Activated B cell treated with CpG ODN at 0.5 μM for 24 hours (primary cell): ENCODE measurements at regions of chr20 and their contacts with region 1.

Region 1: DNA sequence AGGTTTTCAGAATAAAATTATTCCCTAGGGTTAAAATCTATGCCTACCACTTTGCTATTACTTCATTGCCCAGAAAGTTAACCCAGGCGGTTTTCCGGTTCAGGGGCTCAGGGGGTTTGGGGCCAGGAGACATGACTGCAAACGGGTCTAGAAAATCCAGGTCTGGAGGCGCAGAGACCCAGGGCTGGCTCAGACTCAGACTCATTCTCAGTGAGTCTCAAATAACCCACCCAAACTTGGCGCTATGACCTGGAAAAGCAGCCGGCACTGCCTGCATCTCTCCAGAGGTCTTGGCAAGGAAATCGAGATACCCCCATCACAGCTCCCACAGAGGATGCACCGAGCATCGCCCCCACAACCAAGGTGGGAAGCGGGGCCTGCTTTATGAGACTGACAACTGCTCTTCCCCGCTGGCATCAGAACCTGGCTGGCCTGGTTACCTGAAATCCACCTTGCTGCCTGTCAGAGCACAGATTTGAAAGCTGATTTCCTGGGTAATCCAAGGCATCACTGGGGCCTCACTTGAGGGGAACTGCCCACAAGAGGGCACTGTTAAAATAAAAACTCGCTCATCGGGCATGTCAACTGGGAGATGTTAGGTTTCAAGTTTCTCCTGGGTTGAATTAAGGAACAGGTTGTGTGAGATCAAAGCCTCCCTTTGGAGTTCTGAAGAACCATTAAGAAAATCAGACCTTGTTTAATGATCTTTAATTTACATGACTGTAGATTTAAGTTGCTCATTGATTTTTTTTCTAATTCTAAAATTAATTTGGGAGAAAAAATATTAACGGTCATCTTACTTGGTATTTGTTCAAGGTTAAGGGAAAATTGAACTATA is 55.1 kb downstream of the KIF16B start:
- DNase-seq: no peak
- ATAC-seq: no peak
- H3K4me3 Mint-ChIP-seq: no peak overlapping the region
- H3K27ac Mint-ChIP-seq: no peak overlapping the region
- H3K4me1 Mint-ChIP-seq: peaks cover 6% of the 10 kb centered on the region
- H3K27me3 Mint-ChIP-seq: no peaks in the 10 kb centered on the region
- CTCF ChIP-seq: peak; percentile 27

Region 2: GRCh38 chr20:16556301-16556700 is 38.1 kb after region 1 on chr20:
- CTCF ChIA-PET with region 1: no interaction called
- POLR2A ChIA-PET with region 1: no interaction called
- intact Hi-C with region 1: no loop called
- DNase-seq: no peak
- ATAC-seq: no peak
- H3K4me3 Mint-ChIP-seq: no peak overlapping the region
- H3K27ac Mint-ChIP-seq: no peak overlapping the region
- H3K4me1 Mint-ChIP-seq: peaks cover 5% of the 10 kb centered on the region
- H3K27me3 Mint-ChIP-seq: no peaks in the 10 kb centered on the region
- CTCF ChIP-seq: no peak

Region 3: DNA sequence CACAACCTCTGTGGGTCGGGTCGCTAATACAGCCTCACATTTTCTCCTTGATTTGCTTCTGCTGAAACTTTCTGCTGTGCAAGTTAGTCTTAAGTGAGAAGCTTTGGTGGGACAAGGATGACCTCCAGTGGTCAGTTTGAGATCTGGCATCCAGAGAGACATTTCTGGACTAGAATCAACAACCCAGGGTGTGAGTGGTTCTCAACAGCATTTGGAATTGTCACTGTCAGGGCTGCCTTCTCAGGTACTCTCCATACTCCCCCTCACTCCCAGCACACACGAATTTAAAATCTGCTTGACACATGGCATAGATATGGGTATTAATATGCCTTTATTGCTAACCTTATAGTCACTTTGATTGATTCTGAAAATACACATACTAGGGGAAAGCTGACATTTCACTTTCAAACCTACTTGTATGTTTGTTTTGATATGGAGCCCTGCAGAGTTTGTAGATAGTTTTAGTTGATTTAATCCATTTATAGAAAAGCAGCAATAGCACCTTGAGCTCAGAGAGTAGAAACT is 243.2 kb after region 1 on chr20:
- CTCF ChIA-PET with region 1: interaction called, 7 read pairs
- POLR2A ChIA-PET with region 1: no interaction called
- intact Hi-C with region 1: loop called (anchors 1 kb)
- DNase-seq: no peak
- ATAC-seq: peak; percentile 71
- H3K4me3 Mint-ChIP-seq: no peak overlapping the region
- H3K27ac Mint-ChIP-seq: no peak overlapping the region
- H3K4me1 Mint-ChIP-seq: no peaks in the 10 kb centered on the region
- H3K27me3 Mint-ChIP-seq: peaks cover 27% of the 10 kb centered on the region
- CTCF ChIP-seq: peak; percentile 40

Region 4: GRCh38 chr20:17431621-17432364 is 913.6 kb after region 1 on chr20:
- CTCF ChIA-PET with region 1: no interaction called
- POLR2A ChIA-PET with region 1: no interaction called
- intact Hi-C with region 1: loop called (anchors 5 kb)
- DNase-seq: peak; percentile 24
- ATAC-seq: no peak
- H3K4me3 Mint-ChIP-seq: no peak overlapping the region
- H3K27ac Mint-ChIP-seq: no peak overlapping the region
- H3K4me1 Mint-ChIP-seq: no peaks in the 10 kb centered on the region
- H3K27me3 Mint-ChIP-seq: peaks cover 14% of the 10 kb centered on the region
- CTCF ChIP-seq: peak; percentile 89